Activated CD4-positive, alpha-beta T cell treated with anti-CD3 and anti-CD28 coated beads for 36 hours (primary cell): ENCODE measurements at regions of chr2 and their contacts with region 1.

Region 1: DNA sequence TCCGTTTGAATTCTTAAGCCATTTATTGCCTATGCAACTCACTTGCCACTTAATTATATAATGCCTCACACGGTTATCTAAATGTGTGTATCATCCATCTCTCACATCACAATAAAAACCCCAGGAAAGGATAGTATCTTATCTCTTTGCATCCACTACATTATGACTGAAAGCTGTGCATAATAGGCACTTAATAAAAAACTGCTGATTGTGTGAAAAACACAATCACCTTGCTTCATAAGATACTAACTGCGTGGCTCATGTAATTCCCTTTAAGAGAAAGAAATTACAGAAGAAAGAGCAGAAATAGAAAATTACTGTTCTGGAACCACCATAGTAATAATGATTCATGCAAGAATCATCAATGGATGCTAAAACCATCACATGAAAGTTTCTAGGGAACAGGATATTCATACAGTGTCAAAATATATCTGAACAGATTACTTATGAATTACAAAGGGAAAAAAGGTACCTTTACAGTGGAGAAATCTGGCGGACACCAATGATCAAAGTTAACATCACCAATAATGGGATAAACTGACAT is 29.3 kb downstream of the CUL3 start:
- DNase-seq: no peak
- ATAC-seq: peak; percentile 39
- H3K4me3 Mint-ChIP-seq: no peak overlapping the region
- H3K27ac Mint-ChIP-seq: peak overlapping the region; percentile 45
- H3K4me1 Mint-ChIP-seq: peaks cover 41% of the 10 kb centered on the region
- H3K27me3 Mint-ChIP-seq: no peaks in the 10 kb centered on the region

Region 2: GRCh38 chr2:224570328-224570993 is 14.6 kb after region 1 on chr2:
- CTCF ChIA-PET with region 1: interaction called, 18 read pairs
- POLR2A ChIA-PET with region 1: interaction called, 9 read pairs
- intact Hi-C with region 1: loop called (anchors 1 kb)
- DNase-seq: no peak
- ATAC-seq: peak; percentile 82
- H3K4me3 Mint-ChIP-seq: peak overlapping the region; percentile 2
- H3K27ac Mint-ChIP-seq: peak overlapping the region; percentile 1
- H3K4me1 Mint-ChIP-seq: peaks cover 84% of the 10 kb centered on the region
- H3K27me3 Mint-ChIP-seq: no peaks in the 10 kb centered on the region